ENCODE measurements at regions of chr16 and their contacts with region 1.

Region 1: GRCh38 chr16:74695450-74696422 is 4.9 kb downstream of the MLKL start:
- DNase-seq: peak; percentile 78 to 83
- ATAC-seq: peak; percentile 100
- H3K4me3 ChIP-seq: peak overlapping the region; percentile 42 to 68 (median 56)
- H3K27ac ChIP-seq: peak overlapping the region; percentile 38 to 72 (median 56)
- H3K4me1 ChIP-seq: peaks cover 6 to 7% of the 10 kb centered on the region in 2 donors
- H3K27me3 ChIP-seq: peaks cover 0 to 12% (median 8%) of the 10 kb centered on the region in 3 donors
- CTCF ChIP-seq: no peak
- POLR2A ChIP-seq: peak in 1 of 2 donors; percentile 4

Region 2: GRCh38 chr16:74654536-74655050 is 41.1 kb before region 1 on chr16:
- in situ Hi-C with region 1: no loop called
- intact Hi-C with region 1: no loop called
- DNase-seq: no peak
- ATAC-seq: no peak
- H3K4me3 ChIP-seq: no peak overlapping the region
- H3K27ac ChIP-seq: no peak overlapping the region
- H3K4me1 ChIP-seq: no peaks in the 10 kb centered on the region
- H3K27me3 ChIP-seq: no peaks in the 10 kb centered on the region
- CTCF ChIP-seq: no peak
- POLR2A ChIP-seq: no peak

Region 3: DNA sequence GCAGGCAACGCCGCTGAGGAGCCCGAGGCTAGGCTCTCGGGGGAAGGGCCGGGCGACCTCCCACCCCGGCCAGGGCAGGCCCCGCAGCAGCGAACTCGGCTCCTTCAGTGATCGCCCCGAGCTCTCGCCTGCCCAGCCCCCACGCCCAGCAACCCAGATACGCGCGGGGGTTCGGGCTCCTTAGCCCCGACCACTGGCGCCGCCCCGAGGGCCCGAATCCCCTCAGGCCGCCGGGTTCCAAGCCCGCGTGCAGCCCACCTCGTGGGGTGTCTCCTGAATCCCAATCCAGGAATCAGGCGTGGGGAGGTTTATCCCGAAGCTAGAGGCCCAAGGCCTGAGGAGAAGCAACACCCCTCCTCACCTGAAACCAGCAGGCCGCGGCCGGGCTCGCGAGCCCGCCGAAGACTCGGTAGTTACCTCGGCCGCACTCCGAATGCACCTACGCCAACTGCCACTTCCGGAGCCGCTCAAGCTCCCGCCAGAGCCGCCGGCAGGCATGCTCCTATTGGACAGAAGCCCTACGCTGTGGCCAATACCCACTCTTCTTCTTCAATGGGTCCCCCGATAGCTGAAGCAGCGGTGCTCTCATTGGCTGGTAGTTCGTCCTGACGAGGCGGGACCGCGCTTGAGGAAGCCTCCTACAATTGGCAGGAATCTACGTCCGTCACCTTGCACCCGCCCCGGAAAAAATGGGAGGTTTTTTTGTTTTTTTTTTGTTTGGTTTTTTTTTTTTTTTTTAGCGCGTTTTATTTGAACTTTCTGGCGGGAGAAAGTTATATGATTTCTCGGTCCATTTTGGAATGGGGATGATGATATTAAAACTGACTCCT is 29.1 kb before region 1 on chr16 and contains the start of gene RFWD3:
- in situ Hi-C with region 1: no loop called
- intact Hi-C with region 1: loop called (anchors 1 kb)
- DNase-seq: peak; percentile 99
- ATAC-seq: peak; percentile 100
- H3K4me3 ChIP-seq: peak within 1 kb of the TSS; percentile 82 to 98 (median 93)
- H3K27ac ChIP-seq: peak within 1 kb of the TSS; percentile 70 to 81 (median 78)
- H3K4me1 ChIP-seq: peaks cover 8 to 11% of the 10 kb centered on the region in 2 donors
- H3K27me3 ChIP-seq: no peaks in the 10 kb centered on the region
- CTCF ChIP-seq: no peak
- POLR2A ChIP-seq: peak in 1 of 2 donors; percentile 37
- total RNA-seq, gene RFWD3: 2.5 to 7.1 (median 4.1) TPM

Region 4: DNA sequence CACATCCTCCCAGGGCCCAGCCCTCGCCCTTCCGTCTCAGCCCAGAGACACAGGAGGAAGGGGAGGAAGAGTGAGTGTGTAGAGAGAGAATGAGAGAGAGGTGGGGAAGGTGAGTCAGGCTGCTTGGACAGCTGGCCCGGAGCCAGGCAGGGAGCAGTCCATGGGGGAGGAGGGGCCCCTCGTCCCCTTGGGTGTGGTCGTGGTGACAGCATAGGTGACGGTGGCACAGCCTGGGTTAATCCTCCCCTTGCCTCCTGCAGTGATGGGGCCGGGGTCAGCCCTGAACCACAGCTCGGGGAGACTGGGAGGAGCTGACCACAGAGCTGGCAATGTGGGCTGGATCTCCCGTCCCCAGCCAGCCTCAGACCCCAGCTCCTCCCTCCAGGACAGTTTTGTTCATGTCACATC is 42.4 kb after region 1 on chr16:
- in situ Hi-C with region 1: no loop called
- intact Hi-C with region 1: no loop called
- DNase-seq: no peak
- ATAC-seq: no peak
- H3K4me3 ChIP-seq: no peak overlapping the region
- H3K27ac ChIP-seq: no peak overlapping the region
- H3K4me1 ChIP-seq: no peaks in the 10 kb centered on the region
- H3K27me3 ChIP-seq: peaks cover 0 to 3% (median 0%) of the 10 kb centered on the region in 3 donors
- CTCF ChIP-seq: no peak
- POLR2A ChIP-seq: no peak